ENCODE measurements at regions of chr15 and their contacts with region 1.

Region 1: DNA sequence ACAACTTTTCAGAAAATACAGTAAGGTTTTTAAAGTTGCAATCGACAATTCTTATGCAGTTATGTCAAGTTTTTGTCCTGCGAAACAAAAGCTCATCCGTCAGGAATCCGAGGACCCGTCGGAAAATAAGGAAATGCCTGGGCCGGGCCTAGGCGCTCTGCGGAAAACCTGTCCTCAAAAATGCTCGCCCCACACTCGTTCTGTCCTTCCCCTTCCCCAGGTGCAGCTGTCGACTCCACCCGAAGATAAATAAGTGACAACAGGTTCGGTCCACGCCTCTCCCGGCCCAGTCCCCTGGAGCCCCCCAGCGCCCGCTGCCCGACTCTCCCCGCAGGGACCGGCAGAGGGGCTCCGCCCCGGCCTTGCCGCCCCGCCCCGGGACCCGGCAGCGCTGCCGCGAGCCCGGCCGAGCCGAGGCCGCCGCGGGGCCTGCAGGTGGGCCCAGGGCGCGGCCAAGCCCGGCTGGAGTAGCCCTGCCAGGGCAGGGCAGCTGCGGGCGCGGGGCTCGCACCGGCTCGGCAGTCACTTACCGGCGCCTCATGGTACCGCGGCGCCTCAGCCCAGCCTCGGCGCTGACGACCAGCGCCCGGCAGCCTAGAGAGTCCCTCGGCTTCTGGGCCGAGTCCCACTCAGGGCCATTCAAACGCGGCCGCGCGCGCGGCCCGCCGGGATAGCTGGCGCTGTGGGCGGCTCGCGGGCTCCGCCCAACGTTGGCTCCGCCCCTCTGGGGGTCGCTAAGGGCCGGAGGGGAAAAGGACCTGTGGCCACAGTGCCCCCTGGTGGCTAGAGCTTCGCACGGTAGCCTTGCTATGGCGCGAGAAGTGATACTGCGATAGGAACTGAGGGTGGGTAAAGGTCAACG is at the start of gene KATNBL1:
- DNase-seq: peak; percentile 97 to 98
- H3K4me3 ChIP-seq: peak within 1 kb of the TSS; percentile 57 to 72 (median 65)
- H3K27ac ChIP-seq: peak within 1 kb of the TSS; percentile 85 to 96 (median 93)
- H3K4me1 ChIP-seq: peaks cover 6 to 24% (median 15%) of the 10 kb centered on the region in 4 donors
- H3K27me3 ChIP-seq: no peaks in the 10 kb centered on the region
- CTCF ChIP-seq: peak in 6 of 7 experiments; percentile 61 to 97 (median 92)
- EP300 ChIP-seq: no peak
- POLR2A ChIP-seq: peak in 1 of 4 donors; percentile 24
- total RNA-seq, gene KATNBL1: 53.0 to 105 (median 84.9) TPM

Region 2: DNA sequence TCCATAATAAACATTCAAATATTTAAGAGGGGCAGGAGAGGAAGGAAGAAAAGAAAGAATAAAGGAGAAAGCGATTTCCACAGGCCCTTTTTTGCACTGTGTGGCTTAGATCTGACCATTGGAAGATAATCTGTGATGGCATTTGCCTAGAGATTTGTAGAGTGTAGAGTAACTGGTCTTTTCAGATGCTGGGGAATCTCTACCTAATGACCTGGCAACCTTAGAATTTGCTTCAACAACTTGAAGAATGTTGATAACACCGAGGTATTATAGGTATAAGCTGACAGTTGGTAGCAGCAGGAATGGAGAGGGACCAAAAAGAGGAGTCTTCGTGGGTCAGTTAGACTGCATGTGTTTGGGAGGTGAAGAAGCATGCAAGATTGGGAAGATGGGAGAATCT is 149.7 kb before region 1 on chr15:
- intact Hi-C with region 1: loop called (anchors 2 kb)
- DNase-seq: no peak
- H3K4me3 ChIP-seq: no peak overlapping the region
- H3K27ac ChIP-seq: no peak overlapping the region
- H3K4me1 ChIP-seq: peaks cover 0 to 7% (median 3%) of the 10 kb centered on the region in 4 donors
- H3K27me3 ChIP-seq: no peaks in the 10 kb centered on the region
- CTCF ChIP-seq: no peak
- EP300 ChIP-seq: no peak
- POLR2A ChIP-seq: no peak

Region 3: GRCh38 chr15:34084086-34084485 is 125.6 kb before region 1 on chr15:
- intact Hi-C with region 1: no loop called
- DNase-seq: no peak
- H3K4me3 ChIP-seq: no peak overlapping the region
- H3K27ac ChIP-seq: no peak overlapping the region
- H3K4me1 ChIP-seq: no peaks in the 10 kb centered on the region
- H3K27me3 ChIP-seq: no peaks in the 10 kb centered on the region
- CTCF ChIP-seq: no peak
- EP300 ChIP-seq: no peak
- POLR2A ChIP-seq: no peak

Region 4: GRCh38 chr15:34101366-34102175 is 108.1 kb before region 1 on chr15 and contains the starts of genes EMC7 and PGBD4:
- intact Hi-C with region 1: loop called (anchors 5 kb)
- DNase-seq: peak; percentile 99 to 100
- H3K4me3 ChIP-seq: peak within 1 kb of the TSS; percentile 70 to 99 (median 93)
- H3K27ac ChIP-seq: peak within 1 kb of the TSS; percentile 74 to 93 (median 89)
- H3K4me1 ChIP-seq: peaks cover 5 to 47% (median 31%) of the 10 kb centered on the region in 4 donors
- H3K27me3 ChIP-seq: no peaks in the 10 kb centered on the region
- CTCF ChIP-seq: no peak
- EP300 ChIP-seq: no peak
- POLR2A ChIP-seq: peak in 1 of 4 donors; percentile 42
- total RNA-seq, gene EMC7: 23.2 to 54.7 (median 31.5) TPM
- total RNA-seq, gene PGBD4: 0.58 to 1.9 (median 1.4) TPM in 4 of 5 donors, not detected in the other

Region 5: GRCh38 chr15:34161329-34161955 is 48.2 kb before region 1 on chr15:
- intact Hi-C with region 1: no loop called
- DNase-seq: no peak
- H3K4me3 ChIP-seq: no peak overlapping the region
- H3K27ac ChIP-seq: no peak overlapping the region
- H3K4me1 ChIP-seq: no peaks in the 10 kb centered on the region
- H3K27me3 ChIP-seq: no peaks in the 10 kb centered on the region
- CTCF ChIP-seq: no peak
- EP300 ChIP-seq: no peak
- POLR2A ChIP-seq: no peak